ENCODE measurements at regions of chr14 and their contacts with region 1.

Region 1: DNA sequence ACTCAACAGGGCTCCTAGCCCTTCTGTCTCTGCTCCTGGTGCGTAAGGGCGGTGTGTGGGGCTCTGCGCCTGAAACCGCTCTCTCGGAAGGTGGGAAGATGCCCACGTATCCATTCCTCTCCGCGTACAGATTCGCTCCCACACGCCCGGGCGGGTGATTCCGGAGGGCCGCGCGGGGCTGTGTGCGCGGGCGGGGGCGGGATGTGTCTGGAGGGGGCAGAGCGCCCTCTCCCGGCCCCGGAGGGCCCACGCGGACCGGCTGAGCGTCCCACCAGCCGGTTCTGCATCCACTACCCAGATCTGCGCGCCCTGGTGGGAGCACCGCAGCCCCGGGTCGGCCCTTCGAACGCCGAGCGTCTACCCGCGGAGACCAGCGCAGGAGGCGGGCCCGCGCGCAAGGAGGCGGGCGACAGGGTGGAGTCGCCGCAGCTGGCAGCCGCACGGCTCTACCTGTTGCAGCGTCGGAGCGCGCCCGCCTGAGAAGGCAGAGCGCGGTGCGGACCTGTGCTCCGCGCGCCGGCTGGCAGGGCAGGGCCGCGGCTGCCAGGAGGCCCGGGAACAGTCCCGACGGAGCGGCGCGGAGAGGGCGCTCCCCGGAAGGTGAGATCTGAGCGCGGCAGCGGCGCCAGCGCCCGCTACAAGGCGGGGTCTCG is 1.4 kb upstream of the KCNK13 start:
- H3K4me3 Mint-ChIP-seq: peak overlapping the region; percentile 76
- H3K27ac Mint-ChIP-seq: no peak overlapping the region
- H3K4me1 Mint-ChIP-seq: peaks cover 54% of the 10 kb centered on the region
- H3K27me3 Mint-ChIP-seq: peaks cover 39% of the 10 kb centered on the region

Region 2: GRCh38 chr14:89630101-89630829 is 430.2 kb before region 1 on chr14:
- intact Hi-C with region 1: no loop called
- H3K4me3 Mint-ChIP-seq: no peak overlapping the region
- H3K27ac Mint-ChIP-seq: no peak overlapping the region
- H3K4me1 Mint-ChIP-seq: peaks cover 18% of the 10 kb centered on the region
- H3K27me3 Mint-ChIP-seq: no peaks in the 10 kb centered on the region

Region 3: DNA sequence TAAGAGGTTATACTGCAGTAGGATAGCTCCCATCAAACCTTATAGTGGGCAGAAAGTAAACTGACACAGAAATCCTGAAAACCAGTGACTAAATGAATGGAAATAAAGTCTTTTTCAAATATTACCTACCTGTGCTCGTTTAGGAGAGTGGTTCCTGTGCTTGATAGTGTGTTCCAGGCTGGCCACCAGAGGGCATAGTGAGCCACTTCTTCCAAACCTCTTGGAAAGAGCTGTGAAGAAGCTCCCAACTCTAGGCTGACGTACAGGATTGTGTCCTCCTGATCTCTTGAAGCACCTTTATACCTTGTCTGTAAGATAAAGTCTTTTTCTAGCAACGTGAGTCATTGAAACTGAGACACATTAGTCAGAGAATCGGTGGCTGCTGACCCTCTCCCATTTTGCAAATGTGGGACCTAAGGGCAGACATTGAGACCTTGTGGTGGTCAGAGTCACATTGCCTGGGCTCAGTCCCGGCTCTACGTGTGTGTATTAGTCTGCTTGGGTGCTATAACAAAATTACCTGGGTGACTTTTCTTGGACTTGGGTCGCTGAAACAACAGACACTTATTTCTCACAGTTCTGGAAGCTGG is 87.1 kb before region 1 on chr14:
- intact Hi-C with region 1: loop called (anchors 5 kb)
- H3K4me3 Mint-ChIP-seq: no peak overlapping the region
- H3K27ac Mint-ChIP-seq: no peak overlapping the region
- H3K4me1 Mint-ChIP-seq: no peaks in the 10 kb centered on the region
- H3K27me3 Mint-ChIP-seq: no peaks in the 10 kb centered on the region

Region 4: DNA sequence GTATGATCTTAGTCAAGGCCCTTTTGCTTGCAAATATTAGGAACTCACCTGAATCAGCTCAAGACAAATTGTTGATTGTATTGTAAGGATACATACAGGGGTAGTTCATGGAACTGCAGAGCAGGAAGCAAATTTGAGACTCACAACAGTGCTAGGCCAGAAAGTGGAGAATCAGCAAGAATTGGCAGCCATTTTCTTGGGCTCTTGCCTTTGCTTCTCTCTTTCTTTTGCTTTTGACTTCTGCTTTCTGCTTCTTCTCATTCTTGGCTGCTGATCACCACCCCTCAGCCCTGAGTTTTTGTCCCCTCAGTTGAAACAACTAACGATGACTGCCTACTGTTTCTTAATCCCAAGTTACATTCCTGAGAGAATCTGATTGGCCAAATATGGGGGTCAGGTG is 36.1 kb after region 1 on chr14:
- intact Hi-C with region 1: loop called (anchors 5 kb)
- H3K4me3 Mint-ChIP-seq: no peak overlapping the region
- H3K27ac Mint-ChIP-seq: peak overlapping the region; percentile 76
- H3K4me1 Mint-ChIP-seq: peaks cover 52% of the 10 kb centered on the region
- H3K27me3 Mint-ChIP-seq: no peaks in the 10 kb centered on the region

Measured in dendritic cell treated with granulocyte-macrophage colony-stimulating factor and Interleukin-4, amounts not matched to agents 40 ng/mL and 50 ng/mL, for 4 days (primary cell).